ENCODE measurements at regions of chr7 and their contacts with region 1.

Region 1: DNA sequence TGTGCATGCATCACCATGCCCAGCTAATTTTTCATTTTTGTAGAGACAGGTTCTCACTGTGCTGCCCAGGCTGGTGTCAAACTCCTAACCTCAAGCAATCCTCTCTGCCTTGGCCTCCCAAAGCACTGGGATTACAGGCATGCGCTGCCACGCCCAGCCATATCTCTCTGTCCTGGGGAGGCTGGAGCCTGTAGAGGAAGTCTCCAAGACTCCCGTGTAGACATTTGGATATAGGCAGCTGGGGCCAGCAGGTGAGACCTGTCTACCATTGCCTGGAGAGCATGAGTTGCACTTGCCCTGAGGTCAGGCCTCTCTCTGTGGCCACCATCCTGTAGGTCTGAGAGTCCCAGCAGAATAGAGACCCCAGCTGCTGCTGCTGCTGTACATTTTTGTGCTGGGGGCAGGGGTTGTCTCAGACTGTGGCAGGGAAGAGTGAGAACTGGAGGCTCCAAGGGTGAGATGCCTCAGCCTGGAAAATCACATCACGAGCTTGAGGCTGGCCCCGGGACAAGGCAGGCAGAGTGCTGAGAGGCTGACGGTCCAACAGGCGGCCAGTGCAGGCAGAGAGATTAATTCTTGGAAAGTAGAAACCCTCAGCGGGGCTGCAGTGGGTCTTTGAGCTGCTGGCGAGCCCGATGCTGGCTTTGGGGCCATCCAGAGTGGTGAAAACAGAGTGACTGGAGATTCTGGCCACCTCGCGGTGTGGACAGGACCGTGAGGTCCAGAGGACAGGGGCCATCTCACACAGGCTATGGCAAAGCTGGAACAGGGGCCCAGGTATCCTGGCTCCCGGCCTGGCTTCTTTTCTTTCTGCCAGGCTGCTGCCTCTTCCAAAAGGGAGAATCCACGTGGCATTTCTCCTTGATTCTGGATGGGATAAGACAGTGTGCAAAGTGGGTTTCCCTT is 60.9 kb downstream of the TMEM270 start:
- DNase-seq: no peak
- H3K4me3 ChIP-seq: no peak overlapping the region
- H3K27ac ChIP-seq: no peak overlapping the region
- H3K4me1 ChIP-seq: no peaks in the 10 kb centered on the region
- H3K27me3 ChIP-seq: peaks cover 8 to 11% of the 10 kb centered on the region in 2 experiments
- CTCF ChIP-seq: no peak
- POLR2A ChIP-seq: no peak

Region 2: DNA sequence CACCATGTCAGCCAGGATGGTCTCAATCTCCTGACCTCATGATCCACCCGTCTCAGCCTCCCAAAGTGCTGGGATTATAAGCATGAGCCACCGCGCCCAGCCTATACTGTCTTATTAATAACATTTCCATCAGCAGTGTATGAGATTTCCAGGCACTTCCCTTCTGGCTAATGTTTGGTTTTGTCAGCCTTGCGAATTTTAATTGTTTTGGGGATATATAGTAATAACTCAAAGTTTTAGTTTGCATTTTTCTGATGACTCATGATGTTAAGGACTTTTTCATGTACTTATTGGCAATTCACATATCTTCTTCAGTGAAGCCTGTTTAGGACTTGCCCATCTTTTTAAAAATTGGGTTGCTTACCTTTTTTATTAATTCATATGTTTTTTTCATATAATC is 15.1 kb after region 1 on chr7:
- CTCF ChIA-PET with region 1: no interaction called
- POLR2A ChIA-PET with region 1: no interaction called
- dilution Hi-C with region 1: no loop called
- intact Hi-C with region 1: no loop called
- DNase-seq: peak; percentile 36
- H3K4me3 ChIP-seq: no peak overlapping the region
- H3K27ac ChIP-seq: no peak overlapping the region
- H3K4me1 ChIP-seq: peaks cover 6% of the 10 kb centered on the region
- H3K27me3 ChIP-seq: peaks cover 0 to 3% of the 10 kb centered on the region in 2 experiments
- CTCF ChIP-seq: no peak
- POLR2A ChIP-seq: no peak

Region 3: DNA sequence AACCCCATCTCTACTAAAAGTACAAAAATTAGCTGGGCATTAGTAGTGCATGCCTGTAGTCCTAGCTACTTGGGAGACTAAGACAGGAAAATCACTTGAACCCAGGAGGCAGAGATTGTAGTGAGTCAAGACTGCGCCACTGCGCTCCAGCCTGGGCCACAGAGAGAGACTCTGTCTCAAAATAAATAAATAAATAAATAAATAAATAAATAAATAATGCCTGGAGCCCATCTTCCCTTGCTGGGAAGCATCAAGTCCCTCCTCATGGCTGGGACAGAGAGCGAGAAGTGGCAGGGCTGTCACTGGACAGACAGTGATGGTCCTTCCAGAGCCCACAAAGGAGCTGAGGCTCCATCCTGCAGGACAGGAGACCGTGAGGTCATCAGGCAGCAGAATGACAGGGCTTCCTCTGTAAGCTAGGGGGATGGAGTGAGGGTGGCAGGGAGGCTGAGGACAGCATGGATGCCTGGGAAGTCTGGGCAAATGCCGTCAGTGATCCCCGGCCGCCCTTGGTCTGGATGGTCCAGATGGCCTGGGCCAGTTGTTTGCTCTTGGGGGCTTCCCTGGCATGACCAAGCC is 69.7 kb after region 1 on chr7:
- CTCF ChIA-PET with region 1: no interaction called
- POLR2A ChIA-PET with region 1: no interaction called
- dilution Hi-C with region 1: no loop called
- intact Hi-C with region 1: loop called (anchors 2 kb)
- DNase-seq: no peak
- H3K4me3 ChIP-seq: no peak overlapping the region
- H3K27ac ChIP-seq: no peak overlapping the region
- H3K4me1 ChIP-seq: no peaks in the 10 kb centered on the region
- H3K27me3 ChIP-seq: no peaks in the 10 kb centered on the region
- CTCF ChIP-seq: no peak
- POLR2A ChIP-seq: no peak